ENCODE measurements at regions of chr1 and their contacts with region 1.

Region 1: GRCh38 chr1:150010393-150011115 is at the start of gene OTUD7B:
- DNase-seq: peak; percentile 72
- H3K4me3 Mint-ChIP-seq: peak within 1 kb of the TSS; percentile 99
- H3K27ac Mint-ChIP-seq: peak within 1 kb of the TSS; percentile 98
- H3K4me1 Mint-ChIP-seq: peaks cover 35% of the 10 kb centered on the region
- H3K27me3 Mint-ChIP-seq: peaks cover 4% of the 10 kb centered on the region
- total RNA-seq, gene OTUD7B: 41.1 and 41.8 TPM in 2 replicates

Region 2: DNA sequence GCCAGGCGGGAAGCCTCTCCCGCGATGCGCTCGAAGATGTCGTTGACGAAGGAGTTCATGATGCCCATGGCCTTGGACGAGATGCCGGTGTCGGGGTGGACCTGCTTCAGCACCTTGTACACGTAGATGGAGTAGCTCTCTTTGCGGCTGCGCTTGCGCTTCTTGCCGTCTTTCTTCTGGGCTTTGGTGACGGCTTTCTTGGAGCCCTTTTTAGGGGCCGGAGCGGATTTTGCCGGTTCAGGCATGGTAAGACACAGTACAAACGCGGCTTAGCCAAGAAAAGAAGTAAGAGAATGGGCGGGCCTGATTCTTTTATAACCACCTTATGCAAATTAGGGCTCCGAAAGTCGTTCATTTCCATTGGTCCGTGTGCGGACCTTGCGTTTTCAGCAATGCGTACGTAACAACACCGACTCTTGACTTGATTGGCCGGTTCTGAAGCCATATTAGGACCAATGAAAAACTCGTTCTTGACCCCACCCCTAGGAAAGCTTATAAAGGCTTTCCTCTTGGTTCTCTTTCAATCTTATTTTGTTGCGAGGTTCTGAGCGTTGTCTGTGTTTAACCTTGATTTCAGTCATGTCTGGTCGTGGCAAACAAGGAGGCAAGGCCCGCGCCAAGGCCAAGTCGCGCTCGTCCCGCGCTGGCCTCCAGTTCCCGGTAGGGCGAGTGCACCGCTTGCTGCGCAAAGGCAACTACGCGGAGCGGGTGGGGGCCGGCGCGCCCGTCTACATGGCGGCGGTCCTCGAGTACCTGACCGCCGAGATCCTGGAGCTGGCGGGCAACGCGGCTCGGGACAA is 124.0 kb before region 1 on chr1:
- intact Hi-C with region 1: loop called (anchors 2 kb)
- DNase-seq: peak; percentile 90
- H3K4me3 Mint-ChIP-seq: no peak overlapping the region
- H3K27ac Mint-ChIP-seq: no peak overlapping the region
- H3K4me1 Mint-ChIP-seq: peaks cover 13% of the 10 kb centered on the region
- H3K27me3 Mint-ChIP-seq: no peaks in the 10 kb centered on the region

Region 3: GRCh38 chr1:149937060-149937705 is 73.4 kb before region 1 on chr1:
- intact Hi-C with region 1: loop called (anchors 2 kb)
- DNase-seq: no peak
- H3K4me3 Mint-ChIP-seq: peak overlapping the region; percentile 56
- H3K27ac Mint-ChIP-seq: peak overlapping the region; percentile 78
- H3K4me1 Mint-ChIP-seq: peaks cover 28% of the 10 kb centered on the region
- H3K27me3 Mint-ChIP-seq: no peaks in the 10 kb centered on the region

Region 4: GRCh38 chr1:149997585-149998262 is 12.8 kb before region 1 on chr1:
- intact Hi-C with region 1: loop called (anchors 1 kb)
- DNase-seq: no peak
- H3K4me3 Mint-ChIP-seq: peak overlapping the region; percentile 6
- H3K27ac Mint-ChIP-seq: peak overlapping the region; percentile 65
- H3K4me1 Mint-ChIP-seq: peaks cover 52% of the 10 kb centered on the region
- H3K27me3 Mint-ChIP-seq: peaks cover 2% of the 10 kb centered on the region

Region 5: DNA sequence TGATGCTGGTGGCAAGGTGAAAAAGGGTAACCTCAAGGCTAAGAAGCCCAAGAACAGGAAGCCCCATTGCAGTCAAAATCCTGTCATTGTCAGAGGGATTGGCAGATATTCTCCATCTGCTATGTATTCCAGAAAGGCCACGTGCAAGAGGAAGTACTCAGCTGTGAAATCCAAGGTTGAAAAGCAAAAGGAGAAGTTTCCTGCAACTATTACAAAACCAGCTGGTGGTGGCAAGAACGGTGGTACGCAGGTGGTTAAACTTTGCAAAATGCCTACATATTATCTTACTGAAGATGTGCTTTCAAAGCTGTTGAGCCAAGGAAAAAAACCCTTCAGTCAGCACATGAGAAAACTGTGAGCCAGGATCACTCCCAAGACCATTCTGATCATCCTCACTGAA is 43.4 kb after region 1 on chr1:
- intact Hi-C with region 1: loop called (anchors 5 kb)
- DNase-seq: no peak
- H3K4me3 Mint-ChIP-seq: no peak overlapping the region
- H3K27ac Mint-ChIP-seq: no peak overlapping the region
- H3K4me1 Mint-ChIP-seq: peaks cover 12% of the 10 kb centered on the region
- H3K27me3 Mint-ChIP-seq: peaks cover 14% of the 10 kb centered on the region

Region 6: DNA sequence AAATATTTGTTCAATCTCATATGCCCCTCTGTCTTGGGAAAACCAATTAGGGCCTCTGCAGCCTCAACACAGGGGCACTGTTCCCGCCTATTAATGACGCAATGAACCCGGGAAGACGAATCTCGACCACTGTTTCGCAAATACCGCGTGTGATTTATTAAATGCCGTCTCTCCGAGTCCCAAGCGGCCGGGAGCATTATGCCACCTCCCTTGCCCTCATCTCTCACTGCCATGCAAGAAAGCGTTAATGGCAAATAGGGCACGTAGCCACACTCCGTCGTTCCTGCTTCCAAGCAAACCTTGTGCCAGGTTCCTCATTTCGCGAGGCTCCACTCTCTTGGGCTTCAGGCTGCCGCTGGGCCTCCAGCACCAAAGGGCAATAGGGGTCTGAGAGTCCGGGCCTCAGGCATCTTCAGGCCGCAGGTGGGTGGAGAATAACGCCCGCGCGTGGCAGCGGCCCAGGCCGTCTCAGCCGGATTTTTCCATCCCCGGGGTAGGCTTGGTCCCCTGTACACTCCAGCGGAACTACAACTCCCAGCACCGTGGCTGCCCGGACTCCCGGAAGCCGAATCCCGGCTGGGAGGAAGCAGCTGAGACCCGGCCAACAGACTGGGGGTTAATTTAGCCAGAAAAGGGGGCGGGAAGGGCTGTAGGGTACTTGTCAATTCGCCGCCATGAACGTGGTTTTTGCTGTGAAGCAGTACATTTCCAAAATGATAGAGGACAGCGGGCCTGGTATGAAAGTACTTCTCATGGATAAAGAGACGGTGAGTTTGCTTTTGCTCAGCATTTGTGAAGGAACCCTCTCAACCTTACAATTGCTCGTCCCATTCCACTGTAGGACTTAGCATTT is 56.9 kb after region 1 on chr1 and contains the start of gene VPS45:
- intact Hi-C with region 1: loop called (anchors 2 kb)
- DNase-seq: peak; percentile 83
- H3K4me3 Mint-ChIP-seq: peak within 1 kb of the TSS; percentile 97
- H3K27ac Mint-ChIP-seq: peak within 1 kb of the TSS; percentile 98
- H3K4me1 Mint-ChIP-seq: peaks cover 45% of the 10 kb centered on the region
- H3K27me3 Mint-ChIP-seq: peaks cover 5% of the 10 kb centered on the region
- total RNA-seq, gene VPS45: 25.9 and 30.2 TPM in 2 replicates

Region 7: GRCh38 chr1:150613061-150613920 is 602.7 kb after region 1 on chr1:
- intact Hi-C with region 1: loop called (anchors 5 kb)
- DNase-seq: peak; percentile 49
- H3K4me3 Mint-ChIP-seq: peak overlapping the region; percentile 53
- H3K27ac Mint-ChIP-seq: peak overlapping the region; percentile 98
- H3K4me1 Mint-ChIP-seq: peaks cover 62% of the 10 kb centered on the region
- H3K27me3 Mint-ChIP-seq: no peaks in the 10 kb centered on the region